Right ventricle myocardium inferior (tissue), 1 donor: ENCODE measurements at regions of chr1 and their contacts with region 1.

Region 1: GRCh38 chr1:150979092-150980056 is 2.7 kb upstream of the ANXA9 start:
- DNase-seq: peak; percentile 91
- ATAC-seq: peak; percentile 42

Region 2: GRCh38 chr1:150259758-150260669 is 719.4 kb before region 1 on chr1:
- intact Hi-C with region 1: loop called (anchors 5 kb)
- DNase-seq: no peak
- ATAC-seq: peak; percentile 47

Region 3: DNA sequence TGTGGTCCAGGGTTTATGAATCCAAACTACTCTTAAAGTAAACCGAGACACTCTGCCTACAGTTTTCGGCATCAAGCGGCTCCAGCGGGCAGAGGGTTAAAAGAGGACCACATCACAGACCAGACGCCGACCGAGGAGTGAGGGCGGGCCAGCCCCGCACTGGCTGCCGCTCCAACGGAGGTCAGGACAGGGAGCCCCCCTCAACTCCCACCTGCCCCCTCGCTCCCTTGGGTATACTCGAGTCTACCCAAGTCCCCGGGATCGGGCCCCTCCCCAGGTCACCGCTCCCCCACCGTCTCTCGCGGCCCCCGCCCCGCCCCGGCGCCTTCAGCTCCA is 103.3 kb before region 1 on chr1:
- intact Hi-C with region 1: loop called (anchors 5 kb)
- DNase-seq: peak; percentile 82
- ATAC-seq: peak; percentile 60

Region 4: GRCh38 chr1:150925816-150926741 is 53.3 kb before region 1 on chr1 and contains the start of gene SETDB1:
- intact Hi-C with region 1: loop called (anchors 5 kb)
- DNase-seq: peak; percentile 97
- ATAC-seq: peak; percentile 99
- total RNA-seq, gene SETDB1: 16.2 TPM

Region 5: GRCh38 chr1:151008190-151008860 is 29.0 kb after region 1 on chr1 and contains the start of gene PRUNE1:
- intact Hi-C with region 1: loop called (anchors 2 kb)
- DNase-seq: peak; percentile 98
- ATAC-seq: peak; percentile 93
- total RNA-seq, gene PRUNE1: 42.1 TPM